ENCODE measurements at regions of chr7 and their contacts with region 1.

Region 1: GRCh38 chr7:71131256-71132126 is 453 bp upstream of the GALNT17 start:
- DNase-seq: peak; percentile 84

Region 2: DNA sequence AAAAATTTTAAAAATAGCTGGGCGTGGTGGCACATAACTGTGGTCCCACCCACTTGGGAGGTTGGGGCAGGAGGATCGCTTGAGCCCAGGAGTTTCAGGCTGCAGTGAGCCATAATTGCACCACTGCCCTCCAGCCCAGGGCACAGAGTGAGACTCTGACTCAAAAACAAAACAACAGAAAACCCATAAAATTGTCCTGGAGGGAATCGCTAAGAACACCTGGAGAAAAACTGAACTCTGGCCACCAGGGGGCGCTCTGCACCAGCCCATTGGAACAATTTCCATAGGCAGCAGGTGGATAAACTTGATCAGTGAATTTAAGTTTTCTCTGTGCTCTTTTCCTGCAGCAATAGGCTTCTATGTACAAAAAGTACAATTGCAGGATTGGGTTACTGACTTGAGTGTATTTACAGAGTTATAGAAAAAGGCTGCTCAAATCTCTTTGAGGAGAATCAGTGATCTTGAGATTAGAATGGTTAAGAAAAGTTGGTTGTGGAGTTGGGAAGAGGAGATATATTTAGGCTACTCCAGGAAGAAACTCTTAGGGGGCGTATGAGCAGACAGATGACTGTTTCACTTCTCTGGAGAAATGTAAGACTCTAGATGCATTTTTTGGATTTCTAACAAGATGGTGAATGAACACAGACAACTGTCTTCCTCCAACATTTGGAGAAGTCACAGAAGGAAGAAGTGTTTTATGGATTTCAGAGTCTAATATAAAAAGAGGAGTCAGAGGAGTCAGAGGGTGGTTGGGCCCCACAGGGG is 274.4 kb before region 1 on chr7:
- intact Hi-C with region 1: loop called in 1 of 2 experiments (anchors 10 kb)
- DNase-seq: peak; percentile 89

Region 3: DNA sequence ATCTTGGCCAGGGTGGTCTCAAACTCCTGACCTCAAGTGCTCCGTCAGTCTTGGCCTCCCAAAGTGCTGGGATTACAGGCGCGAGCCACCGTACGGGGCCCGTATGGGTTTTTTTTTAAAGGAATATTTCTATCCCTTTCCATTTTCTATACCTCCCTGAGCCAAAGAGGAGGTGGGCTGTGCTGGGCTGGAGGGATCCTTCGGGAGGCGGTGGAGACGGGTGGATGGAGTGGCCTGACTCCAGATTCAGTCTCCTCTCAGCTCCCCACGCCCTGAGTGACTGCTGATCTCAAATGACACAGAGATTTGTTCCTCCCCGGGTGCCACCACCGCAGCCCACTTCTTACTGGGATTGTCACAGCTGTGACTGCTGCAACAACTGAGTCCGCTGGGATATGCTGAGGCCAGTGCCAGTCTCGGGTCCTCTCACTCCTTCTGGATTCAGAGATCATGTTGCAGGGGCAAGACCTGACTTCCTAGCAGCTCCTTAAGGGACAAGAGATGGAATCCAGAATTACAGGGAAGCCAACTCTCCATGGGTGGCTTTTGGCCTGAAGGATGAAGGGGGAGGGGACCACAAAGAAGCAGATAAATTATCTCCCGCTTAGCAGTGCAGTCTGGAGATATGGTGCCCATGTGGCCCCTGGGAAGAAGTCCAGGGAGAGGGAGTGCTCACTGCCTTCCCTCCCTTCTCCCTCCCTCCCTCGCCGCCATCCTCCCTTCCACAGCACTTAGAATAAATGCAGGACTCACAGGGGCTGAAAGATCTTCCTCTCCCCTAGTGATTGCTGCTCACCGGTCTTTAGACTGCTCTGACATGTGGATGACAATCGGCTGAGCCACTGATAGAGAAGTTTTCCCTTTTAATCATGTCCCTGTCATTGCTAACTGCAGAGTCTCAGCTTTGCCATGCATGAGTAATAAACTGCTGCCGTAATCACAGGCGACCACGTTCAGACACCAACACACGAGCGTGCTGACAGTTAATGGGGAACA is 14.7 kb after region 1 on chr7:
- intact Hi-C with region 1: loop called in 1 of 2 experiments (anchors 1 kb)
- DNase-seq: no peak

Region 4: GRCh38 chr7:71497256-71497946 is 365.9 kb after region 1 on chr7:
- intact Hi-C with region 1: loop called in 1 of 2 experiments (anchors 5 kb)
- DNase-seq: no peak

Region 5: GRCh38 chr7:71733107-71733870 is 601.8 kb after region 1 on chr7:
- intact Hi-C with region 1: loop called in 1 of 2 experiments (anchors 10 kb)
- DNase-seq: peak; percentile 95